ENCODE measurements at regions of chr12 and their contacts with region 1.

Region 1: GRCh38 chr12:104108755-104109445 is 29.1 kb downstream of the NFYB start:
- DNase-seq: peak; percentile 73
- H3K4me3 ChIP-seq: no peak overlapping the region; a peak in 1 of 4 replicates
- H3K27ac ChIP-seq: peak overlapping the region in 1 of 2 experiments; percentile 44; a peak in 2 of 4 replicates
- H3K4me1 ChIP-seq: no peaks in the 10 kb centered on the region; a peak in 2 of 4 replicates
- H3K27me3 ChIP-seq: no peaks in the 10 kb centered on the region
- CTCF ChIP-seq: peak; percentile 96
- EP300 ChIP-seq: no peak
- RAD21 ChIP-seq: peak; percentile 93

Region 2: DNA sequence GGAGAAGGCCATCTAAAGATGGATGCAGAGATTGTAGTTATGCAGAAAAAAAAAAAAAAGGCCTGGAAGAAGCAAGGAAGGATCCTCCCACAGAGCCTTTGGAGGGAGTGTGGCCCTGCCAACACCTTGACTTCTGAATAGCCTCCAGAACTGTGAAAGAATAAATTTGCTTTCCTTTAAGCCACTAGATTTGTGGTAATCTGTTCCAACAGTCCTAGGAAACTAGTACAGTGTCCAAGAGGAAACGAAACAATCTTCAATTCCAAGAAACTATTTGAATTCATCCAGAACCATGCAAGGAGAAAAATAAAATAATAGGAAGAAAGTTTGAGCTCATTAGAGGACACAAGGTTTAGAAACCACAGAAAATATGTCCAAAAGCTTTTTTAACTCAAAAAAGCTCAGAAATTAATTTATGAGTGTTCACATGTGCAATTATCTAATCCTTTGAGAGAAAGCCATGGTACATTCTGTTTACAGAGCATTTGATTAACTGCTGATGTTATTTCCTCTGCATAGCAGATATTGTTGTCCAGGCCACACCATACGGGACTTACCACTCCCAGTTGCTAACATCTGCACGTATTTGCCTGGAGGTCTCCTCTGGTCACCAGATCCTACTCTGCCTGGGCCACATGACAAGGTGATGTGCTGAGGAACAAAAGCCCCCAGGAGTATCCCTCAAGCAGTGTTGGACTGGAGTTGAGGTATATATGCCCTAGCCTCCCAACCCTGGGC is 551.8 kb before region 1 on chr12:
- CTCF ChIA-PET with region 1: no interaction called
- POLR2A ChIA-PET with region 1: no interaction called
- DNase-seq: no peak
- H3K4me3 ChIP-seq: no peak overlapping the region
- H3K27ac ChIP-seq: no peak overlapping the region
- H3K4me1 ChIP-seq: peaks cover 0 to 5% of the 10 kb centered on the region in 2 experiments; a peak in 2 of 4 replicates
- H3K27me3 ChIP-seq: no peaks in the 10 kb centered on the region
- CTCF ChIP-seq: no peak
- EP300 ChIP-seq: no peak
- RAD21 ChIP-seq: no peak

Region 3: DNA sequence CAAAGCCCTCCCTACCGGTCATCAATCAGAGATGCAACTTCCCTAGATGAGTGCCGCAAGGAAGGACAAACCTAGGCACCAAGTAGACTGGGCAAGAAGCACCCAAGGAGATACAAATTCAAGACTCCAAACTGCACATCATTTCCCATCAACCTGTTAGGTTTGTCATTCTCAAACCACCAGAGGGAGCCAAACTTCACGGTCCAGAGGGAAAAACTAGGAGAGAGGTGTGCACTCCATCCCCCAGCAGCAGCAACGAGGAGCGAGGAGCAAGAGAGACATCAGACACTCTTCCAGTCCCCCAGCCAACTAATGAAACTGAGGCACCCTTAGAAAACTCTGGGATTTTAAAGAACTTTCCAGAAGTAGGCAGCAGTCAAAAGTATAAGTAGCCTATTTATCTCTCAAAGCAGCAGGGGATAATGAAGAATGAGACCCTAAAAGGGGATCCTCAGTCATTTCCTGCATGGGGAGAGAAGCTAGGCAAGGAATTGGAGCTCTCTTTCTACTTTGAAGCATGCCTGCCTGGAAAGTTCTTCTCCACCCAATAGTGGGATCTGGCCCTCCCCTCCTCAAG is 230.9 kb before region 1 on chr12:
- CTCF ChIA-PET with region 1: interaction called, 28 read pairs
- POLR2A ChIA-PET with region 1: no interaction called
- DNase-seq: peak; percentile 66
- H3K4me3 ChIP-seq: no peak overlapping the region; a peak in 1 of 4 replicates
- H3K27ac ChIP-seq: no peak overlapping the region
- H3K4me1 ChIP-seq: peaks cover 0 to 7% of the 10 kb centered on the region in 2 experiments; a peak in 2 of 4 replicates
- H3K27me3 ChIP-seq: no peaks in the 10 kb centered on the region
- CTCF ChIP-seq: peak; percentile 81
- EP300 ChIP-seq: no peak
- RAD21 ChIP-seq: peak; percentile 90

Region 4: DNA sequence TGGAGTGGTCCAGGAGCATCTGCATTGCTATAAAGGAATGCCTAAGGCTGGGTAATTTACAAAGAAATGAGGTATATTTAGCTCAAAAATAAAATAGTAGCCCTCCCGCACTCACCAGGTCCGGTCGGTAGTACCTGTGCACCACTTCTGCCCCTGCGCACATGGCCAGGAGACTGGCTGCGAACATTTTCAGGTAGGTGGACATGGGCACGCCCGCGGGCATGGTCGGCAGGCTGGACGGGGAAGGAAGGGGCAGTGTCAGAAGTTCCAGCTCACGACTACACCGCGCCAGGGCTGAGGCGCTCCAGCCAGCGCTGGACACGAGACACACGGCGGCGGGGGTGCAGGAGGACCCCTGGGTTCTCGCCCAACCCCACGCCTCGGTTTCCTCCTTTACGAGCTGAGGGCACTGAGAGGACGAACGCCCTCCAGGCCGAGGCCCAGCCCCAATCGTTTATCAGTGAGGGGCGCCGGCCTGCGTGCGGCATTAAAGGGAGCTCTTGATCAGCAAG is 152.3 kb before region 1 on chr12:
- CTCF ChIA-PET with region 1: interaction called, 21 read pairs
- POLR2A ChIA-PET with region 1: interaction called, 4 read pairs
- DNase-seq: no peak
- H3K4me3 ChIP-seq: peak overlapping the region; percentile 78 to 87
- H3K27ac ChIP-seq: peak overlapping the region; percentile 94 to 98
- H3K4me1 ChIP-seq: peaks cover 8 to 13% of the 10 kb centered on the region in 2 experiments; a peak in 2 of 4 replicates
- H3K27me3 ChIP-seq: no peaks in the 10 kb centered on the region
- CTCF ChIP-seq: no peak
- EP300 ChIP-seq: no peak
- RAD21 ChIP-seq: no peak

Region 5: DNA sequence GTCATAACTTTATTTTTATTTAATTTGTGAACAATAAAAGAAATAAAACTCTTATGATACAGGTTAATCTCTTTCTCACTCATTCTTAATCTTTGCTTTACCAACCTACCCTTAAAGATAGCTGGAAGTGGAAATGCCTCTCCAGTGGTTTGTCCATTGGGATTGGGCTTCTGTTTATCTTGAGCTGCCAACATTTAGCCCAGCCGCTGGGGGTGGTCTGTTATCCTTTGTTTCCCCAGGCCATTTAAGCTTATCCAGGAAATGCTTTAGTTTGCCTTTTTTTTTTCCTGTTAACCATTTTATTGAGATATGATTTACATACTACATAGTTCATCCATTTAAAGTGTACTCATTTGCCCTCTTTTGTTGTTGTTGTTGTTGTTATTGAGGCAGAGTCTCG is 135.0 kb before region 1 on chr12:
- CTCF ChIA-PET with region 1: interaction called, 13 read pairs
- POLR2A ChIA-PET with region 1: no interaction called
- DNase-seq: peak; percentile 28
- H3K4me3 ChIP-seq: no peak overlapping the region
- H3K27ac ChIP-seq: no peak overlapping the region
- H3K4me1 ChIP-seq: peaks cover 0 to 10% of the 10 kb centered on the region in 2 experiments; a peak in 2 of 4 replicates
- H3K27me3 ChIP-seq: no peaks in the 10 kb centered on the region
- CTCF ChIP-seq: no peak
- EP300 ChIP-seq: no peak
- RAD21 ChIP-seq: no peak

Region 6: DNA sequence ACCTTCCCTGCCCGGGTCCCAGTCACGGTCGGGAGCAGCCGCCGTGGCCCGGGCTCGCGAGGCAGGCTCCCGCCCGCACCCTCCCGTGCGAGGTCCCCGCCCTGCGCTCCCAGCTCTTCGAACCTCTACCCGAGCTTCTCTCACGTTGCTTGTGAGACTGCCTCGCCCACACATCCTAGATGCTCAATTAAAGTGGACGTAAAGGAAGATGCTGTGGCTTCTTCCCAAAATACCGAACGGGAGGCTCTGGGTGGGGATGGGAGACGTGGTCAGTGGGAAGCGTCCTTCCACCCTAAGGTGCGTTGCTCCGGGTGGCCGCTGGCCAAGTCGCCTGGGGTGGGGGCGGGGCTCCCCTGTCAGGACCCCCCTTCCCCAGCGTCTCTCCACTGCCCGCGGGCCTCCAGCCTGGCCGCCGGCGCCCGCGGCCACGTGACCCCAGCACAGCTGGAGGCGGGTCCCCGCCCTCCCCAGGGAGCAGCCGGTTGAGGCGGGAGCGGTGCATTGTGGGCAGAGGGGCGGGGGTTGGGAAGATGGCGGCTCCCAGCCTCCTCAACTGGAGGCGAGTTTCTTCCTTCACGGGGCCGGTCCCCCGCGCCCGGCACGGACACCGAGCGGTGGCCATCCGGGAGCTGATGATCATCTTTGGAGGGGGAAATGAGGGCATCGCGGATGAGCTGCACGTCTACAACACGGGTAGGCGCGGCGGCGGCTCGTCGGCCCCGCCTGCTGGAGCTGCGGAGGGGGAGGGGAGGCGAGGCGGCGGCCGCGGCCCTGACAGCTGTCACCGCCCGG is 44.7 kb before region 1 on chr12 and contains the start of gene HCFC2:
- CTCF ChIA-PET with region 1: interaction called, 15 read pairs
- POLR2A ChIA-PET with region 1: no interaction called
- DNase-seq: peak; percentile 99
- H3K4me3 ChIP-seq: peak within 1 kb of the TSS; percentile 94 to 98
- H3K27ac ChIP-seq: peak within 1 kb of the TSS; percentile 77 to 89
- H3K4me1 ChIP-seq: peaks cover 6 to 13% of the 10 kb centered on the region in 2 experiments; a peak in 3 of 4 replicates
- H3K27me3 ChIP-seq: no peaks in the 10 kb centered on the region
- CTCF ChIP-seq: no peak
- EP300 ChIP-seq: peak; percentile 8 to 34; a peak in 2 of 4 replicates
- RAD21 ChIP-seq: no peak
- polyA plus RNA-seq, gene HCFC2: 5.2 and 6.6 TPM in 2 replicates

Region 7: GRCh38 chr12:104090687-104091086 is 18.2 kb before region 1 on chr12:
- CTCF ChIA-PET with region 1: interaction called, 24 read pairs
- POLR2A ChIA-PET with region 1: no interaction called
- DNase-seq: no peak
- H3K4me3 ChIP-seq: no peak overlapping the region
- H3K27ac ChIP-seq: no peak overlapping the region
- H3K4me1 ChIP-seq: no peaks in the 10 kb centered on the region
- H3K27me3 ChIP-seq: no peaks in the 10 kb centered on the region
- CTCF ChIP-seq: no peak
- EP300 ChIP-seq: no peak
- RAD21 ChIP-seq: no peak

Region 8: GRCh38 chr12:104121001-104121400 is 12.1 kb after region 1 on chr12:
- CTCF ChIA-PET with region 1: interaction called, 15 read pairs
- POLR2A ChIA-PET with region 1: no interaction called
- DNase-seq: no peak
- H3K4me3 ChIP-seq: no peak overlapping the region
- H3K27ac ChIP-seq: peak overlapping the region; percentile 28 to 59; a peak in 3 of 4 replicates
- H3K4me1 ChIP-seq: peaks cover 0 to 17% of the 10 kb centered on the region in 2 experiments; a peak in 1 of 4 replicates
- H3K27me3 ChIP-seq: no peaks in the 10 kb centered on the region
- CTCF ChIP-seq: no peak
- EP300 ChIP-seq: peak in 1 of 2 experiments; percentile 51; a peak in 1 of 4 replicates
- RAD21 ChIP-seq: no peak

Measured in SK-N-SH (cell line).